Activated B cell treated with CpG ODN at 0.5 μM for 24 hours (primary cell): ENCODE measurements at regions of chr15 and their contacts with region 1.

Region 1: GRCh38 chr15:78065284-78065872 is 12.1 kb downstream of the TBC1D2B start:
- DNase-seq: no peak
- ATAC-seq: no peak
- H3K4me3 Mint-ChIP-seq: peak overlapping the region; percentile 29
- H3K27ac Mint-ChIP-seq: no peak overlapping the region
- H3K4me1 Mint-ChIP-seq: peaks cover 18% of the 10 kb centered on the region
- H3K27me3 Mint-ChIP-seq: no peaks in the 10 kb centered on the region
- CTCF ChIP-seq: no peak

Region 2: GRCh38 chr15:77747175-77748077 is 318.0 kb before region 1 on chr15:
- CTCF ChIA-PET with region 1: no interaction called
- POLR2A ChIA-PET with region 1: no interaction called
- intact Hi-C with region 1: no loop called
- DNase-seq: no peak
- ATAC-seq: no peak
- H3K4me3 Mint-ChIP-seq: no peak overlapping the region
- H3K27ac Mint-ChIP-seq: no peak overlapping the region
- H3K4me1 Mint-ChIP-seq: no peaks in the 10 kb centered on the region
- H3K27me3 Mint-ChIP-seq: peaks cover 6% of the 10 kb centered on the region
- CTCF ChIP-seq: no peak

Region 3: DNA sequence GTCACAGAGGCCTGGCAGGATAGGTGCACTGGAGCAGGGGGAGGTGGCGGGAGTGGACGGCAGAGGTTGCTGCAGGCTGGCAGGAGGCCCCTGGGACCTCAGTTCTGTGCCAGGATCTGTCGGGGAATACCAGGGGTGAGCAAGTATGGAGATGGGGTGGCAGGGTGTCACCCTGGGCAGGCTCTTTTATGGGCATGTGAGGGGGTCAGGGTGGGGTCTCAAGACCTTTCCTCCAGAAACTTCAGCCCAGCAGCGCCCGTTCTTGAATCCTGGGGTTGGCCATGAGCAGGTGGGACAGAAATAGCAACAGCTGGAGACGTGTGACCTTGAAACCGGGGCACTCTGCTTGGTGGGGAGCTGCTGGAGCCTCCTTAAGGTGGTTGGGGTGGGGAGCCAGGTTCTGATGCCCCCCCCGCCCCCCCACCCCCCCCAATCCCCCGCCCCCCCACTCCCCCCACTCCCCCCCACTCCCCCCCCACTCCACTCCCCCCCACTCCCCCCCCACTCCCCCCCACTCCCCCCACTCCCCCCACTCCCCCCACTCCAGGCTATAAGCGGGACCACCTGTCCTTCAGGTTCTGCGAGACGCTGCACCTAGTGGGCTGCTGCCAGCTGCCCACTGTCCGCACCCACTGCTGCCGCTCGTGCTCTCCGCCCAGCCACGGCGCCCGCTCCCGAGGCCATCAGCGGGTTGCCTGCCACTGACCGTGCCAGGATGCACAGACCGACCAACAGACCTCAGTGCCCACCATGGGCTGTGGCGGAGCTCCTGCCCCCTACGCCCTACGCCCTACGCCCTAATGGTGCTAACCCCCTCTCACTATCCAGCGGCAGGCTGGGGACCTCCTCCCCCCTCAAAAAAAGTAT is 72.8 kb before region 1 on chr15:
- CTCF ChIA-PET with region 1: no interaction called
- POLR2A ChIA-PET with region 1: no interaction called
- intact Hi-C with region 1: loop called (anchors 5 kb)
- DNase-seq: no peak
- ATAC-seq: no peak
- H3K4me3 Mint-ChIP-seq: no peak overlapping the region
- H3K27ac Mint-ChIP-seq: peak overlapping the region; percentile 66
- H3K4me1 Mint-ChIP-seq: peaks cover 48% of the 10 kb centered on the region
- H3K27me3 Mint-ChIP-seq: no peaks in the 10 kb centered on the region
- CTCF ChIP-seq: no peak

Region 4: DNA sequence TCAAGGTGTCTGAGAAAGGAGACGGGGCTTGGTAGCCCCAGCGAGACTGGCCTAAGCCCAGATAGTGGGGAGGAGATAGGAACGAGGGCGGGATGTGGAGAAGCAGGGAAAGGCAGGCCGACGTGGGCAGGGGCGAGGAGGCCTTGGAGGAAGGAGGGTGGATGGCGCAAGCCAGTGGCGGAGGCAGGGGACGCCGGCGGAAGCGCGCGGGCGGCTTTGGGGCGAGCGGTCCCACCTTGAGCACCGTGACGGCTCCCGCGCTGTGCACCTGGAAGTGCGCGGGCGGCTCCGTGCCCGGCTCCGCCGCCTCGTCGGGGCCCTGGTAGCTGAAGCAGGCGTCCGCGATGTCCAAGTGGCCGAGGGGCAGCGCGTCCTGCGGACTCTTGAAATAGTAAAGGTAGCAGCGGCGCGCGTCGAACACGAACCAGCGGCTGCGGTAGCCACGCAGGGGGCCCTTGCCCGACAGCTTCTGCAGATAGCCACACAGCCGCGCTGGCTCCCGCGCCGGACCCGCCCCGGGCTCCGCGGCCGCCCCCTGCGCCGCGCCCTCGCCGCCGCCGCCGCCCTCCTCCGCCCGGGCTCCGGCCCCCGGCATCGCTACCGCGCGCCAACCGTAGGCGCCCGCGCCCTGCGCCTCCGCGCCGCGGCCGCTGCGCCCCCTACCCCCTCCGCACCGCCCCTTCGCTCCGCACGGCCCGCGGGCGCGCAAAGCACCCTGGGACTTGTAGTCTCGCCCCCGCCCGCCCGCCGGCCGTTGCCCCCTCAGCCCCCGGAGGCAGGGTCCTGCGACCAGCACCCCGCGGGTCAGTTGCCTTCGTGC is 11.9 kb after region 1 on chr15 and contains the start of gene TBC1D2B:
- CTCF ChIA-PET with region 1: interaction called, 3 read pairs
- POLR2A ChIA-PET with region 1: interaction called, 5 read pairs
- intact Hi-C with region 1: loop called (anchors 1 kb)
- DNase-seq: peak; percentile 68
- ATAC-seq: peak; percentile 91
- H3K4me3 Mint-ChIP-seq: peak within 1 kb of the TSS; percentile 92
- H3K27ac Mint-ChIP-seq: peak within 1 kb of the TSS; percentile 68
- H3K4me1 Mint-ChIP-seq: peaks cover 27% of the 10 kb centered on the region
- H3K27me3 Mint-ChIP-seq: no peaks in the 10 kb centered on the region
- CTCF ChIP-seq: no peak
- total RNA-seq, gene TBC1D2B: 12.9 and 13.7 TPM in 2 replicates

Region 5: DNA sequence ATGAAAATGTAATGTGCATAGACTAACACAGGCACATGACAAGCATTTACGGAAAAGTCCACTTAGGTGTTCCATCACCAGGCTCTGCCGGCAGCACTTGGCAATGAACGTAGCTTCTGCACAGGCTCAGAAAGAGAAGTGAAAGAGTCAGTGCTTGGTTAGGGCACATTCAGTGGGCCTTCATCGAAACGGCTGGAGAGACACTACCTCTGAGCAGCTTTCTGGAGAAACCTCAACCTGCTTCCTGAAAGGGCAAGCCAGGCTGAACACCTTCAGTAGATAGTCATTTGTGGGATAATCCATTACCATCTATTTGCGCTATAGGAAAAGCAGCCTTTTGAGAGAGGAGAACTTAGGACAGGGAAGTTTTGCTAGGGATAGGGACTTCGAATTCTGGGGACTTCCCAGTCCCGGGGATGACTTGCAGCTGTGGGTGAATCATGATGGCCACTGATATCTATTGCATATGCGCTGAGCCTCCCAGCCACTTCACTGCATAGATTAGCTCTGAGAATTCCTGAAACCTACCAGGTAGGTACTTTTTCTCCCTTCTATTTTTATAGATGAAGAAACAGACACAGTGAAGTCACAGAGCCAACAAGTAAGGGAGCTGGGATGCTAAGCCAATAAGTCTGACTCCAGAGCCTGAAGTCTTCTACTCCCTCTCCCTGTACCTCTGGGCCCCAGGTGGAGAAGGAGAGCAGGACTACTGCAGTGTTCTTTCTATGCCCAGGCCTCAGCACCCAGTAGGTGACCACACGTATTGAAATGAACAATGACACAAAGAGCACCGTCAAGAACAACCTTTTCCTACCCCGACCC is 22.8 kb after region 1 on chr15:
- CTCF ChIA-PET with region 1: no interaction called
- POLR2A ChIA-PET with region 1: no interaction called
- intact Hi-C with region 1: loop called (anchors 2 kb)
- DNase-seq: no peak
- ATAC-seq: peak; percentile 95
- H3K4me3 Mint-ChIP-seq: peak overlapping the region; percentile 56
- H3K27ac Mint-ChIP-seq: peak overlapping the region; percentile 79
- H3K4me1 Mint-ChIP-seq: peaks cover 18% of the 10 kb centered on the region
- H3K27me3 Mint-ChIP-seq: peaks cover 5% of the 10 kb centered on the region
- CTCF ChIP-seq: no peak

Region 6: DNA sequence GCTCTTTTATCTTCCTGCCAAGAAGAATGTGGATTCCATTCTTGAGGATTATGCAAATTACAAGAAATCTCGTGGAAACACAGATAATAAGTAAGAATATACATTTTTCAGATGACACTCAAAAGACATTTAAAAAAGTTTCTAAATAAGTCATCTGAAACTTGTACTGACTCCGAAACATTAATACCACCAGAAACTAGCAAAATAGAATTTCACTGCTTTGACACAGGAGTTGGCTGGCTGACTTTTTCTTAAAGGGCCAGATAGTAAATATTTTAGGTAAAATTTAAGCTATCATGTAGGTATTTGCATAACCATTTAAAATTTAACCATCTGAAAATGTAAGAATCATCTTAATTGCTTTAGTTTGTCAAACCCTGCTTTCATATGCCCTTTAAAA is 828.2 kb after region 1 on chr15:
- CTCF ChIA-PET with region 1: no interaction called
- POLR2A ChIA-PET with region 1: no interaction called
- intact Hi-C with region 1: no loop called
- DNase-seq: no peak
- ATAC-seq: no peak
- H3K4me3 Mint-ChIP-seq: no peak overlapping the region
- H3K27ac Mint-ChIP-seq: no peak overlapping the region
- H3K4me1 Mint-ChIP-seq: no peaks in the 10 kb centered on the region
- H3K27me3 Mint-ChIP-seq: no peaks in the 10 kb centered on the region
- CTCF ChIP-seq: no peak

Region 7: DNA sequence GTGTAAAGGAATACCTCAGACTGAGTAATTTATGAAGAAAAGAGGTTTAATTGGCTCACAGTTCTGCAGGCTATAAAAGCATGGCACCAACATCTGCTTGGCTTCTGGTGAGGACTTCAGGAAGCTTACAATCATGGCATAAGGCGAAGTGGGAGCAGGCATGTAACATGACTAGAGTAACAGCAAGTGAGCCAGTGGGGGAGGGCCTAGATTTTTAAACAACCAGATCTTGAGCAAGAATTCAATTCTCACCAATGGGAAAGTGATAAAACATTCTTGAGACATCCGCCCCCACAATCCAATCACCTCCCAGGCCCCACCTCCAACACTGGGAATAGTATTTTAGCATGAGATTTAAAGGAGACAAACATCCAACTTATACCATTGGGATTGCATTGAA is 1949.8 kb after region 1 on chr15:
- CTCF ChIA-PET with region 1: no interaction called
- POLR2A ChIA-PET with region 1: no interaction called
- intact Hi-C with region 1: no loop called
- DNase-seq: no peak
- ATAC-seq: no peak
- H3K4me3 Mint-ChIP-seq: no peak overlapping the region
- H3K27ac Mint-ChIP-seq: peak overlapping the region; percentile 2
- H3K4me1 Mint-ChIP-seq: peaks cover 82% of the 10 kb centered on the region
- H3K27me3 Mint-ChIP-seq: no peaks in the 10 kb centered on the region
- CTCF ChIP-seq: no peak